Activated CD4-positive, alpha-beta T cell treated with anti-CD3 and anti-CD28 coated beads, Interleukin-2, amount 10 ng/mL, durations not matched to agents 24 days and 14 days (primary cell): ENCODE measurements at regions of chr22 and their contacts with region 1.

Region 1: GRCh38 chr22:31829505-31829904 is 75.7 kb downstream of the DEPDC5 start:
- DNase-seq: peak; percentile 69
- H3K4me3 Mint-ChIP-seq: peak overlapping the region; percentile 26
- H3K27ac Mint-ChIP-seq: peak overlapping the region; percentile 89
- H3K4me1 Mint-ChIP-seq: peaks cover 31% of the 10 kb centered on the region
- H3K27me3 Mint-ChIP-seq: no peaks in the 10 kb centered on the region

Region 2: DNA sequence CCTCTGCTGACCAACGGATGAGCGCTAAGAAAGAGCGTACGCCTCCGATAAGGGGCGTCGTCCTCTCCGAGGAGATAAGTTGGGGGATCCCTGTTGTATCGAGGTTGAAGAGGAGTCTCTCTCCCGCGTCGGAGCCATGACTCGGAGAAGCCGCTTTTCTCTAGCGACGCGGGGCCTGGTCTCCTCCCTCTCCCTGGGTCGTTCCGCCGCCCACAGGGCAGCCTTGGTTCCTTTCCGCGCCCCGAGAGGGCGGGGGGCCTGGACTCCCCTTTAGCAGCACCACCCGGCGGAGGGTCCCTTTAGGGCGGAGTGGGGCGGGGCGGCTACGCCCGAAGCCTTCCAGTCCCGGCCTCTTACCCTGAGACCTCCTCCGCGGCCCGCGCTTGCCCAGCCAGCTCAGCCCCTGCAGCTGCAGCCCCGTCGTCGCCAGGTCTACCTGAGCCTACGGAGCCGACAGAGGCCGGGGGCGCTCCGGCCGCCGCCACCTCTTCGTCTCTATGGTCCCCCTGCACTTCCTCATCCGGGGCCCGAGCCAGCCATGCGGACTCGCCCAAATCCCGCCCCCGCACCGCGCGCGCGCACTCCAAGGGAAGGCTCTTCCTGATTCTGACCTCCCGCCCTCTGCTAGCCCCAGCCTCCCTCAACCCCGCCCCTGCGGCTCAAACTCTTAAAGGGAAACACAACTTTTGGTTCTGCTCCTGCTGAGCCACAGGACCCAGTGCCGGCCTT is 79.7 kb before region 1 on chr22 and contains the start of gene PRR14L:
- intact Hi-C with region 1: loop called (anchors 2 kb)
- DNase-seq: peak; percentile 100
- H3K4me3 Mint-ChIP-seq: peak within 1 kb of the TSS; percentile 99
- H3K27ac Mint-ChIP-seq: peak within 1 kb of the TSS; percentile 96
- H3K4me1 Mint-ChIP-seq: peaks cover 48% of the 10 kb centered on the region
- H3K27me3 Mint-ChIP-seq: peaks cover 2% of the 10 kb centered on the region
- total RNA-seq, gene PRR14L: 61.0 and 63.6 TPM in 2 replicates

Region 3: GRCh38 chr22:31802575-31802974 is 26.9 kb before region 1 on chr22:
- intact Hi-C with region 1: no loop called
- DNase-seq: no peak
- H3K4me3 Mint-ChIP-seq: no peak overlapping the region
- H3K27ac Mint-ChIP-seq: no peak overlapping the region
- H3K4me1 Mint-ChIP-seq: no peaks in the 10 kb centered on the region
- H3K27me3 Mint-ChIP-seq: no peaks in the 10 kb centered on the region

Region 4: GRCh38 chr22:31818481-31819392 is 10.8 kb before region 1 on chr22:
- intact Hi-C with region 1: loop called (anchors 1 kb)
- DNase-seq: no peak
- H3K4me3 Mint-ChIP-seq: no peak overlapping the region
- H3K27ac Mint-ChIP-seq: peak overlapping the region; percentile 21
- H3K4me1 Mint-ChIP-seq: peaks cover 11% of the 10 kb centered on the region
- H3K27me3 Mint-ChIP-seq: no peaks in the 10 kb centered on the region

Region 5: DNA sequence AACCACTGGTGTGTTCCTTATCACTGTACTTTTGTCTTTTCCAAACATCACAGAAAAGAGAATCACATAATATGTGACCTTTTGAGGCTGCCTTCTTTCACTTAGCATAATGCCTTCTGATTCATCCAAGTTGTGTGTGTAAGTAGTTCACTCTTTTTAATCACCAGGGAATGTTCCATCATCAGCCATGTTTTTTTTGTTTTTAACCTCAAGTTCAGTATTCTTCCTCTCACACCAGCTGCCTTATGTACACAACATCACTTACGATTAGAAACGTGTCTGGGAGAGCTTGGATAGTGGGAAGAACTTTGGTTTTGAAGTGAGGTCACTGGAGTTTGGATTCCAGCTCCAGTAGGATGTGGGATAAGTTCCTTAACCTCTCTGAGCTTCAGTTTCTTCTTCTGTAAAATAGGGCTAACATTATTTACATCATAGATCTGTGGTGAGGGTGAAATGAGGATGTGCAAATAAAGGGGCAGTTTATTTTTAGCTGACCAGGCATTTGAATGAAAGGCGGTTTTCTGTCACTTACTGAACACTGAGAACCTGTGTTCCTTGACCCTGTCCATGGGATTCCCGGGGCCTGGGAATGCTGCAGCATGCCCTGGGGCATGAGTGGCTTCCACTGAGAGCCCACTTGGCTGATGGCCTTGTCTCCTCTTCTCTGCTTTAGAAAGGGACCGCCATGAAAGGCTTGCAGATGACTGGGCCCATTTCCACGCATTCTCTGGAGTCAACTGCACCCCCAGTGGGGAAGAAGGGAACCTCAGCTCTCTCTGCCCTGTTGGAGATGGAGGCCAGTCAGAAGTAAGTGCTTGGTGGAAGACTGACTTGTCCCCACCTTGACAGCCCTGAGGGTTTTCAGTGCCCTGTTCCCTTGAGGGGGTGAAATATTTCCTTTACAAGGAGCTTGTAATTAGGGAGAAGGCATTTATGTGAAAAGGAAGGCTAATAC is 16.9 kb after region 1 on chr22:
- intact Hi-C with region 1: loop called (anchors 1 kb)
- DNase-seq: peak; percentile 59
- H3K4me3 Mint-ChIP-seq: no peak overlapping the region
- H3K27ac Mint-ChIP-seq: no peak overlapping the region
- H3K4me1 Mint-ChIP-seq: peaks cover 7% of the 10 kb centered on the region
- H3K27me3 Mint-ChIP-seq: no peaks in the 10 kb centered on the region

Region 6: DNA sequence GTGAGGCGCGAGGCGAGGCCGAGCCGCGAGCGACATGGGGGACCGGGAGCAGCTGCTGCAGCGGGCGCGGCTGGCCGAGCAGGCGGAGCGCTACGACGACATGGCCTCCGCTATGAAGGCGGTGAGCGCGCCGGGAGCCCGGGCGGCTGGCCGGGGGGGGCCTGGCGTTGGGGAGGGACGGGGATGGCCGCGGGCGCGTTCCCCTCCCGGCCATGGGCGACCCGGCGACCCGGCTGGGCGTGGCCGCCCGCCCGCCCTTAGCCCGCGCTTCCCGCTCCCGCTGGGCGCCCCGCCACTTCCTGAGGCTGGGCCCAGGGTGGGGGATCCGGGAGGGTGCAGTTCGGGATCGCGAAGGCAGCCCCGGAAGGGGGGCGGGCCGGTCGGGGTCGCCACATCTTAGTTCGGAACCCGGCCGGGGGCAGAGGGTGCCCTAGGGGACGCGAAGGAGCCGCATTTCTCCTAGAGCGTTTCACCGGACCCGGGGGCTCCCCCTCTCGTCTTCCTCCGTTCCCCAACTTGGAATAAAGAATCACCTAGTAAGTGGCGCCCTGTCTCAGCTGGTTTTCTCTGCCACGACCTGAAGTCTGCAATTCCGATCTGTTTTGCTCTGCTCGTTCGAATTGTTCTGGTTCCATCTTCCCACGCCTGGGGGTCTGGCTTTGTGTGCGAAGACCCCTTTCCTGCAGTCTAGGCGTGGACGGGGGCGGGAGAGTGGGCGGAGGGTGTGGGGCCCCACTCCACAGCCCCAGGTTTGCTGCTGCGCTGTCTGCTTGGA is 115.4 kb after region 1 on chr22:
- intact Hi-C with region 1: no loop called
- DNase-seq: peak; percentile 84
- H3K4me3 Mint-ChIP-seq: no peak overlapping the region
- H3K27ac Mint-ChIP-seq: no peak overlapping the region
- H3K4me1 Mint-ChIP-seq: peaks cover 21% of the 10 kb centered on the region
- H3K27me3 Mint-ChIP-seq: no peaks in the 10 kb centered on the region

Region 7: DNA sequence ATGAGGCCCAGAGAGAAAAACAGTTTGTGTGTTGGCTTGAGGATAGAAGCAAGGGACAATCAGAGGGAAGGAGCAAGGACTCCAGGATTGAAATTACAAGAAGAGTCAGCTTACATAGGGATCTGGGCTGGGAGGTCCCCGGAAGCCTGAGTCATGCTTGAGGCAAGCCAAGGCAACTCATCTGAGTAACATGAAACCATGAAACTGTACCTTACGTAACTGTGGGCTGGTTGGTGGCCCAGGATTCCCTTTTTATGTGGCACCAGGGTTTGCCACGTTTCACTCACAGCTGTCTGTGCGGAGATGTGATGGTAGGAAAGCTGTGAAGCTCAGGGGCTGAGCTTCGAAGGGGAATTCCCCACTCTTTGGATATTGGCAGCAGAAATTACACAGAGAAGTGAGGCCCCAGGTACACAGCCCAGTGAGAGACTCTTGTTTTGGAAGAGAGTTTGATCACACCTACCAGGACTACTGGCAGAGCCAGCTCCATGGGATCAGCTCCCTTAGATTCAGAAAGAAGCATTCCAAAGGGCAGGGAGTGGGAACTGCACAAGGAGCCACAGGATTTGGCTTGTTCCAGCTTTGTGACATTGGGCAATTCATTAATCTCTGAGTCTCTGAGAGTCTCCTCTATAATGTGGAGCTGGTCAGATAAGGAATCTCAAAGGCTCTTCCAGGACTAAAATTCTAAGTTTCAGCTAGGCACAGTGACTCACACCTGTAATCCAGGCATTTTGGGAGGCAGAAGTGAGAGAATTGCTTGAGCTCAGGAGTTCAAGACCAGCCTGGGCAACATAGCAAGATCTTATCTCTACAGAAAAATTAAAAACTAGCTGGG is 221.4 kb after region 1 on chr22:
- intact Hi-C with region 1: loop called (anchors 10 kb)
- DNase-seq: peak; percentile 85
- H3K4me3 Mint-ChIP-seq: peak overlapping the region; percentile 13
- H3K27ac Mint-ChIP-seq: peak overlapping the region; percentile 46
- H3K4me1 Mint-ChIP-seq: peaks cover 15% of the 10 kb centered on the region
- H3K27me3 Mint-ChIP-seq: peaks cover 66% of the 10 kb centered on the region